ENCODE measurements at regions of chr22 and their contacts with region 1.

Region 1: GRCh38 chr22:17477391-17477833 is 85.9 kb upstream of the SLC25A18 start:
- DNase-seq: peak; percentile 58 to 83
- ATAC-seq: peak; percentile 83 to 87
- H3K4me3 ChIP-seq: peak overlapping the region; percentile 22 to 46 (median 42)
- H3K27ac ChIP-seq: peak overlapping the region; percentile 88 to 90 (median 89)
- H3K4me1 ChIP-seq: peaks cover 59 to 61% of the 10 kb centered on the region in 2 donors
- H3K27me3 ChIP-seq: no peaks in the 10 kb centered on the region
- CTCF ChIP-seq: no peak
- POLR2A ChIP-seq: peak; percentile 35 to 50

Region 2: GRCh38 chr22:17213976-17214375 is 263.4 kb before region 1 on chr22:
- in situ Hi-C with region 1: loop called in 1 of 4 experiments (anchors 25 kb)
- intact Hi-C with region 1: no loop called
- DNase-seq: peak; percentile 60 to 73
- ATAC-seq: peak; percentile 70 to 94
- H3K4me3 ChIP-seq: no peak overlapping the region
- H3K27ac ChIP-seq: no peak overlapping the region
- H3K4me1 ChIP-seq: no peaks in the 10 kb centered on the region
- H3K27me3 ChIP-seq: no peaks in the 10 kb centered on the region
- CTCF ChIP-seq: peak; percentile 36 to 58 (median 52)
- POLR2A ChIP-seq: no peak

Measured in gastrocnemius medialis (tissue), 4 donors.